ENCODE measurements at regions of chr7 and their contacts with region 1.

Region 1: DNA sequence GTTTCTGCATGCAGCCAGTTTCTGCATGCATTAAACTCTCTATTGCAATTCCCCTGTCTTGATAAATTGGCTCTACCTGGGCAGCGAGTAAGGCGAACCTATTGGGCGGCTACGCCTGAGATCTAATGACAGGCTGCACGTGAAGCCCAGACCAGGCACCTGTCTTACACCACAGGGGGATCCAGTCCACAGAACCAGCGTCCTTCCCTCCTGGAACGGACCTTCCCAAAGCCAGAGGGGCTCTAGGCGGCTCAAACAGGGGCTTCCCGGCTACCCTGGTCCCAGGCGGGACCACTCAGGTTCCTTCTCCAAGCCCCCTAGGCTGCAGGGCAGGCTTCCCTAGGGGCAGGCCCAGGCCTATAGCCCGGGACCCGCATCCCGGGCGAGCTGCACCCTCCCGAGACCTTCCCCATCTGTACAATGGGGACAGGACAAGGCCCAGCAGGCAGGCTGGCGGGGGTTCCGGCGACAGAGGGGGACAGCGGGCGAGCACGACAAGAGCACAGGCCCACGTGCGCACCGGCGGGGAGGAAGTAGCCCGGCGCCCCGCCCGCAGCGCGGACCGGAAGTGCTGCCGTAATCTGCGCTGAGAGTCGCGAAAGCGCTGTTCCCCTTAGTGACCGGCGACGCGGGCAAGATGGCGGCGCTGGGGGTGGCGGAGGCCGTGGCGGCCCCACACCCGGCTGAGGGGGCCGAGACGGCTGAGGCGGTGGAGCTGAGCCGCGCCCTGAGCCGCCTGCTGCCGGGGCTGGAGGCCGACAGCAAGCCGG is at the start of gene DNAAF5:
- DNase-seq: peak; percentile 94
- H3K4me3 ChIP-seq: peak within 1 kb of the TSS; percentile 79
- H3K27ac ChIP-seq: peak within 1 kb of the TSS; percentile 31
- H3K4me1 ChIP-seq: peaks cover 20% of the 10 kb centered on the region
- CTCF ChIP-seq: no peak
- total RNA-seq, gene DNAAF5: 36.2 and 42.6 TPM in 2 replicates

Region 2: DNA sequence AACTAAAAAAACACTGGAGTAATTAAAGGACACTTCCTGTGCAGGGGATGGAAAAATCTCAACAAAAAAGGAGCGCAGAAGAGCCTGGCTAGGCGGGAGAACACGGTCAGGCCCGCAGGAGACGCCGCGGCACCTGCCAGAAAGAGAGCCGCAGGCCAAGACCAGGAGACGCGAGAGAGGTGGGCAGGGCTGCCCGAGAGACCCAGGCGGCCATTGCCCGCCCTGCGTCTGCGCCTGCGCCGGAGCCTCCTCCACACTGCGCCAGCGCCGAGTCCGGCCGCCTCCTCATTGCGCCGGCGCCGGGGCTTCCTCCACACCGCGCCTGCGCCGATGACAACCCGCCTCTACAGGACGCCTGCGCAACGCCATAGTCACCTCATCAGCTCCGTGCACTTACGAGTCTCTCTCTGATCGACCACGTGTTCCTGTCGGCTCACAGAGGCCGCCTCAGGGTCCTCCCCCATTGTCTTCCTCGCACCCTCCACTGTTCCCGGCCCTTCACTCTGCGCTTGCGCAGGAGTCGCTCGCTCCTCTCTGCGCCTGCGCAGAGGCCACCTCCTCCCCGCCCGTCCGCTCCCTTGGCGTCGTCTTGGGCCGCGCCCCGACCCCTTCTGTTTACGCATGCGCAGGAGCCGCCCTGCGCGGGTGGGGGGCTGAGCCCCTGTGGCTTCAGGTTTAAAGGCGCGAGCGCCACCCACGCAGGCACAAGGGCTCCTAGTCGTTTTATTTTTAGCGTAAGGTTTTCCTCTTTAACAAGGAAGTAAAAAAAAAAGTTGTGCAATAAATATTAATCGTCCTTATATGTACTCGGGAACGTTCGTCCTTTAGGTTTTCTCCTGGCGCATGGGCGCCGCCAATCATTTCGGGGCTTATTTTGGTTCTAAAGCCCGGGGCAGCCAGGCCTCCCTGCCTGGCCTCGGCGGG is 577.1 kb before region 1 on chr7:
- CTCF ChIA-PET with region 1: no interaction called
- POLR2A ChIA-PET with region 1: no interaction called
- intact Hi-C with region 1: loop called (anchors 5 kb)
- DNase-seq: peak; percentile 97
- H3K4me3 ChIP-seq: peak overlapping the region; percentile 69
- H3K27ac ChIP-seq: peak overlapping the region; percentile 71
- H3K4me1 ChIP-seq: peaks cover 27% of the 10 kb centered on the region
- CTCF ChIP-seq: no peak

Region 3: GRCh38 chr7:424961-425793 is 301.1 kb before region 1 on chr7:
- CTCF ChIA-PET with region 1: no interaction called
- POLR2A ChIA-PET with region 1: no interaction called
- intact Hi-C with region 1: no loop called
- DNase-seq: no peak
- H3K4me3 ChIP-seq: no peak overlapping the region
- H3K27ac ChIP-seq: no peak overlapping the region
- H3K4me1 ChIP-seq: no peaks in the 10 kb centered on the region
- CTCF ChIP-seq: no peak

Region 4: DNA sequence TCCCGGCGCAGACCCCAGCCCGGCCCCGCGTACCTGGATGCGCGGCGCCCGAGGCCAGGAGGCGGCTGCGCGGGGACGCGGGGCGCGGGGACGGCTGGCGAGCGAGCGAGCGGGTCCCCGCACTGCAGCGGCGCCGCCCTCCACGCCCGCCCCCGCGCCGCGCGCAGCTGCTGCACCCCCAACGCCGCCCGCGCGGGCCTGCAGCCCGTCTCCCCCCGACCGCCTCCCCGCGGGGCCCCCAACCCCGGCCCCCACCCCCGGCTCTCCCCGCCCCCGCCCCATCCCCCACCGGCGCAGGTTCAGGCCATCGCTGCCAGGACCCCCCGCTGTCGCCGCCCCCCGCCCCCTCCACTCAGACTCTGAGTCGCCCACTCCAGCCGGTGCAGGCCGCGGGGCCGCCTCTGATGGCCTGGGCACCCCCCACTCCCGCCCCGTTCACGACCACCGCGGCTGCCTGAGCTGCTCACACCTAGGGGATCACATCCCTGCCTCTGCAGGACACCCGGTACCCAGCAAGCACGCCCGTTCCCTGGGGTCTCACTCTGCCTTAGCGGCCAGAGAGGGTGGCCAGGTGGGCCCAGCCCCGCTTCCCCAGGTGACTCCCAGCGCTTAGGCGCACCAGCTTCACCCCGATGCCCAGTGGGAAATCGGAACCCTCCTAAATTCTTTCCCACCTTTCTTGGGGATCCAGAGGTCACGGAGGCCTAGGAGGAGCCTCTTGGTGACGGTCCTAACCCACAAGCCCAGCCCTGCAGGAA is 13.7 kb before region 1 on chr7:
- CTCF ChIA-PET with region 1: no interaction called
- POLR2A ChIA-PET with region 1: no interaction called
- intact Hi-C with region 1: no loop called
- DNase-seq: no peak
- H3K4me3 ChIP-seq: no peak overlapping the region
- H3K27ac ChIP-seq: no peak overlapping the region
- H3K4me1 ChIP-seq: no peaks in the 10 kb centered on the region
- CTCF ChIP-seq: no peak

Region 5: GRCh38 chr7:749140-749551 is 22.9 kb after region 1 on chr7:
- CTCF ChIA-PET with region 1: interaction called, 11 read pairs
- POLR2A ChIA-PET with region 1: no interaction called
- intact Hi-C with region 1: no loop called
- DNase-seq: no peak
- H3K4me3 ChIP-seq: no peak overlapping the region
- H3K27ac ChIP-seq: no peak overlapping the region
- H3K4me1 ChIP-seq: no peaks in the 10 kb centered on the region
- CTCF ChIP-seq: no peak

Region 6: GRCh38 chr7:816300-816750 is 90.1 kb after region 1 on chr7:
- CTCF ChIA-PET with region 1: no interaction called
- POLR2A ChIA-PET with region 1: no interaction called
- intact Hi-C with region 1: loop called (anchors 5 kb)
- DNase-seq: peak; percentile 99
- H3K4me3 ChIP-seq: peak overlapping the region; percentile 84
- H3K27ac ChIP-seq: no peak overlapping the region
- H3K4me1 ChIP-seq: peaks cover 35% of the 10 kb centered on the region
- CTCF ChIP-seq: no peak

Region 7: DNA sequence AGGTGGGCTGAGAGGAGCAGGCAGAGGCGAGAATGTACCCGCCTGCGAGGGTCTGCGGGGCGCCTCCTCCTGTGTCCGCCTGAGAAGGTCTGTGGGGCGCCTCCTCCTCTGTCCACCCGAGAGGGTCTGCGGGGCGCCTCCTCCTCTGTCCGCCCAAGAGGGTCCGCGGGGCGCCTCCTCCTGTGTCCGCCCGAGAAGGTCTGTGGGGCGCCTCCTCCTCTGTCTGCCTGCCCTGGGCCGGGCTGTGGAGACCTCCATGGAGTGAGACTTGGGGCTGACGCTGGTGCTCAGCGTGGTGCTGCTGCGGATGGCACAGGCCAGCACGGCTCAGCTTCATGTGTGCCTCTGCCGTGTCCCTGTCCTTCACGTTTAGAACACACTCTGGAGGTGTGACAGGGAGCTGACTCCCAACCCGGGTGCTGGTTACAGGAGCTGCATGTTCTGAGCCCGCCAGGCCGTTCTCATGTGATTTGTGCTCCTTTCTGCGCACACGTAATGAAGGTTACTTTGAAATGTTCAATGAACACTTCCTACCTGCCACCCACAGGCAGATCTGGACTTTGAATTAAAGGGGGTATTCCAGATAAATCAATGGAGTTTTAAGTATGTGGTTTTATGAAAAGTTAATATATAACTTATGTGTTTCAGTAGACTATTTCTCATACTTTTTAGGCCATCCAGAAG is 129.6 kb after region 1 on chr7:
- CTCF ChIA-PET with region 1: no interaction called
- POLR2A ChIA-PET with region 1: no interaction called
- intact Hi-C with region 1: no loop called
- DNase-seq: no peak
- H3K4me3 ChIP-seq: no peak overlapping the region
- H3K27ac ChIP-seq: no peak overlapping the region
- H3K4me1 ChIP-seq: no peaks in the 10 kb centered on the region
- CTCF ChIP-seq: no peak